ENCODE measurements at regions of chr16 and their contacts with region 1.

Region 1: DNA sequence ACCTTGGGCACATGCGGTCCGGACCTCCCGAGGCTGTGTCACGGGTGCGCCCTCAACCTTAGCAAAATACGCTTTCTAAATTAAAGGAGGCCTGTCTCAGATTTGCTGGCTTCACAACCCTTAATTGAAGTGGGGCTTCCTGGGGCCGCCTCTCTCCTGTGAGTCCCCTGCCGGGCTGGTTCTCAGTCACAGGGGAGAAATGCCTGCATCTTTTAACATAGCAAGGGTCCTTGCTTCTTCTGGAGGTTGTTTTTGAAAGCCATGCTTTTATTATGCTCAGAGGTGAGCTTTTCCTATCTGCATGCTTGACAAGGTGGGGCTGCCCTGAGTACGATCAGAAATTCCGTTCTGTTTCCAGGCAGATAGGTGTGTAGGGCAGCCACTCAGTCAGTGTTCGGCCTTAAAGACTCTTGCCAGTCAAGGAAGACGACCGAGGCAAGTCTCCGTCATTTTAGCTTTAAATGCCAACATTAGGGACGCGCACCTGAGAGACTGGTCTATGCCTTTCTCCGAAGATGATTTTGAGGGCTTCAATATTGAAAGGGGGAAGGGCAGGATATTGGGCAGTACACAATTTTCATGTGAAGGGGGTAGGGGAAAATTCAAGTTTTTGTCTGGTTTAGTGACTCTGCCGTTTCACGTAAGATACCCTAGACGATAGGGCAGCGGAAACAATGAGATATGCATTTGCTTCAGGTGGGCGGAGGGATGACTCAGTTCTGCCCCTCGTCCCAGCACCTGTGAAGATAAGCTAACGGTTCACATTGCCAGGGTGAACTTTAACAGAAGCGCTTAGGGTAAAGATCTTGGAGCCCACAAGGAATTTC is 5.5 kb upstream of the SLC7A5 start:
- DNase-seq: no peak
- ATAC-seq: no peak
- H3K4me3 ChIP-seq: no peak overlapping the region
- H3K27ac ChIP-seq: no peak overlapping the region
- H3K4me1 ChIP-seq: peaks cover 7% of the 10 kb centered on the region; the same call in 1 of the 2 replicates
- H3K27me3 ChIP-seq: no peaks in the 10 kb centered on the region
- CTCF ChIP-seq: no peak

Region 2: GRCh38 chr16:87853411-87854052 is 21.3 kb before region 1 on chr16:
- CTCF ChIA-PET with region 1: interaction called, 5 read pairs
- POLR2A ChIA-PET with region 1: no interaction called
- intact Hi-C with region 1: loop called (anchors 2 kb)
- DNase-seq: peak; percentile 81
- ATAC-seq: peak; percentile 30
- H3K4me3 ChIP-seq: peak overlapping the region; percentile 50; the same call in 1 of the 2 replicates
- H3K27ac ChIP-seq: peak overlapping the region; percentile 95
- H3K4me1 ChIP-seq: peaks cover 42% of the 10 kb centered on the region
- H3K27me3 ChIP-seq: no peaks in the 10 kb centered on the region
- CTCF ChIP-seq: no peak